ENCODE measurements at regions of chr11 and their contacts with region 1.

Region 1: DNA sequence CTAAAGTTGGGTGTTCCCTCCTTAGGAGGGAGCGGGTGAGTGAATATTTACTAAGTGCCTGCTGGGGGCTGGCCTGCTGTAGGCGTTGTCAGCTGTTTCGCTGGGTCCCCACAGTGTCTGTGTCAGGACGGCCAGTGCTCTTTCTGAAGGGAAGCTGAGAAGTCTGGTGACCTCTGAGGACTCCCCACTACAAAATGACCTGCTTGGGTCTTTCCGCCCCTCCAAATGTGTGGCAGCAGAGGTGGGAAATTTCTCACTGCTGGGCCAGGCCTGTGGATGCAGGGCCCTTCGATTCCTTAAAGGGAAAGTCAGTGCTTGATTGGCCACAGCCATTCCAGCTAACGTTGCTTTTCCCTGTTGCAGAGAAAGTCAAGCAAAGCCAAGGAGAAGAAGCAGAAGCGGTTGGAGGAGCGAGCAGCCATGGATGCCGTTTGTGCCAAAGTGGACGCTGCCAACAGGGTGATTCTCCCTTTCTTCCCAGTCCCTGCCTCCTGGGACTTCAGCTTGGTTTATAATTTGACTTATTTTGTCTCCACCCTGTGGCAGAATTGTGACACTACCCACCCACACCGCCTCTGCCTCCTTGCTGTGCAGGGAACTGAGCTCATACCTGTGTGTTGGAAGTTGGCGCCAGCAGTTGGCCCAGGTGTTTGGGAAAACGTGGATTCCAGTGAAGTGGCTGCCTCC is 6.8 kb downstream of the NAA40 start:
- DNase-seq: peak; percentile 48
- ATAC-seq: peak; percentile 96
- H3K4me3 ChIP-seq: no peak overlapping the region
- H3K27ac ChIP-seq: peak overlapping the region; percentile 41; the same call in 1 of the 2 replicates
- H3K4me1 ChIP-seq: peaks cover 14% of the 10 kb centered on the region
- H3K27me3 ChIP-seq: no peaks in the 10 kb centered on the region
- CTCF ChIP-seq: peak; percentile 81

Region 2: GRCh38 chr11:63929616-63930015 is 16.0 kb before region 1 on chr11:
- CTCF ChIA-PET with region 1: interaction called, 10 read pairs
- POLR2A ChIA-PET with region 1: interaction called, 12 read pairs
- in situ Hi-C with region 1: no loop called
- intact Hi-C with region 1: no loop called
- DNase-seq: no peak
- ATAC-seq: no peak
- H3K4me3 ChIP-seq: no peak overlapping the region
- H3K27ac ChIP-seq: no peak overlapping the region
- H3K4me1 ChIP-seq: no peaks in the 10 kb centered on the region
- H3K27me3 ChIP-seq: no peaks in the 10 kb centered on the region
- CTCF ChIP-seq: no peak

Region 3: GRCh38 chr11:63986156-63986931 is 40.7 kb after region 1 on chr11 and contains the start of gene OTUB1:
- CTCF ChIA-PET with region 1: no interaction called
- POLR2A ChIA-PET with region 1: no interaction called
- in situ Hi-C with region 1: no loop called
- intact Hi-C with region 1: no loop called
- DNase-seq: peak; percentile 65
- ATAC-seq: peak; percentile 95
- H3K4me3 ChIP-seq: peak within 1 kb of the TSS; percentile 89 to 93
- H3K27ac ChIP-seq: peak within 1 kb of the TSS; percentile 90
- H3K4me1 ChIP-seq: peaks cover 25% of the 10 kb centered on the region
- H3K27me3 ChIP-seq: no peaks in the 10 kb centered on the region
- CTCF ChIP-seq: no peak
- total RNA-seq, gene OTUB1: 118 TPM

Region 4: DNA sequence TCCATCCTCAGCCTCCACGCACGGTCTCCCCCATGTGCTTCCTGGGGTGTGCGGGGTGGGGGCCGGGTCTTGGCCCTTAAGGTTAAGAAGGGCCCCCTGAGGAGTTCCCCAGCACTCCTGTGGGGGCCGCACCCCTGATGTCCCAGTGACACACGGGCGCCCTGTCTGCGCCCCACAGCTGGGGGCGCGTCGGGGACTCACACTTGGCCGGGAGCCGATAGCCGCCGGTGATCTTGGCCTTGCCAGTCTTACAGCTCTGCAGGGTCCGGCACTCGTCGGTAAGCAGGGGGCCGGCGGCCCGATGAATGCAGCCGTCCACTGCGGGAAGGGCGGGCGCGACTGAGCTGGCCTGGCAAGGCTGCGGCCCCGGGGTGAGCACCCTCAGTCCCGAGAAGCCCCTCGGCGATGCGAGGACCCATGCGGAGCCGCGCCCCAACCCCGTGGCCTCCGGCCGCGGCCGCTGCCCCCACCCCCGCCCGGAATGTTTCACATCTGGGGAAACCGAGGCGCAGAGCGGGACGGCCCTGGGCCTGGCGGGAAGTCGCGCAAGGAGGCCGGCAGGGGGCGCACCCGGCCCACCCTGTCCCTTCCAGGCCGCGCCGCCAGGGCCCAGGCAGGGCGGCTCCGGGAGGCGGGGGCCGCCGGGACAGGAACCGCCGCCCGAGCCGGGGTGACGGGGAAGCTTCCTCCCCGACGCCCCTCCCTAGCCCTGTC is 54.6 kb after region 1 on chr11:
- CTCF ChIA-PET with region 1: no interaction called
- POLR2A ChIA-PET with region 1: no interaction called
- in situ Hi-C with region 1: no loop called
- intact Hi-C with region 1: no loop called
- DNase-seq: no peak
- ATAC-seq: no peak
- H3K4me3 ChIP-seq: no peak overlapping the region
- H3K27ac ChIP-seq: no peak overlapping the region
- H3K4me1 ChIP-seq: peaks cover 50% of the 10 kb centered on the region
- H3K27me3 ChIP-seq: no peaks in the 10 kb centered on the region
- CTCF ChIP-seq: peak; percentile 73